ENCODE measurements at regions of chr21 and their contacts with region 1.

Region 1: DNA sequence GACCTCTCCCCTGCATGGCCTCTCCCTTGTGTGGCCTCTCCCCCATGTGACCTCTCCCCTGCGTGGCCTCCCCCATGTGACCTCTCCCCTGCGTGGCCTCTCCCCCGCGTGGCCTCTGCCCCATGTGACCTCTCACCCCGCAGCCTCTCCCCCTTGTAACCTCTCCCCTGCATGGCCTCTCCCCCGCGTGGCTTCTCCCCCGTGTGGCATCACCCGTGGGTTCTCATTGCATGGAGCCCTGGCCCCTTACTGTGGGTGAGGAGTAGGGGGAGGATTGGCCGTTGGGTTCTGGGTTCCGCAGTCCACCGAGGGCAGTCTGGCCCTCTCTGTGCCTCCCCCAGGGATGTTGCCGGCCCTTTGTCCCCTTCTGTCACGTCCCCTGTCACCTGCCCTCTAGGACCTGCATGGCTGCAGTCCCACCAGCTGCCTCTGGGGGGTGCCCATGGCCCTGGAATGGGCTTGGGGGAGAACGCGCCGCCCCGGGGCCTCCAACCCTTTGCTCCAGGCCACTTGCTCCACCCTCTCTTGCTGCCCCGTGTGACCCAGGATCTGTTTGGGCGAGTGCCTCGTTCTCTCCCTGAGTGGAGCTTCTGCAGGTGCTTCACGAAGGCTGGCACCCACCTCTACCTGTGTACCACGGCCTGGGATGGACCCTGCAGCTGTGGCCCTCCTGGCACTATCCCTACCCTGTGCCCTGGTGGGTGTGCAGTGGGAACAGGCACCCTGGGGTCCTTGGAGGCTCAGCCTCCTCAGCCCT is 21.3 kb downstream of the RRP1 start:
- DNase-seq: peak; percentile 36
- ATAC-seq: peak; percentile 85
- H3K4me3 ChIP-seq: no peak overlapping the region
- H3K27ac ChIP-seq: no peak overlapping the region
- H3K4me1 ChIP-seq: peaks cover 10 to 22% of the 10 kb centered on the region in 2 experiments
- H3K27me3 ChIP-seq: no peaks in the 10 kb centered on the region
- CTCF ChIP-seq: peak in 2 of 3 experiments; percentile 96 to 97; a peak in 4 of 6 replicates
- POLR2A ChIP-seq: no peak
- RAD21 ChIP-seq: no peak

Region 2: DNA sequence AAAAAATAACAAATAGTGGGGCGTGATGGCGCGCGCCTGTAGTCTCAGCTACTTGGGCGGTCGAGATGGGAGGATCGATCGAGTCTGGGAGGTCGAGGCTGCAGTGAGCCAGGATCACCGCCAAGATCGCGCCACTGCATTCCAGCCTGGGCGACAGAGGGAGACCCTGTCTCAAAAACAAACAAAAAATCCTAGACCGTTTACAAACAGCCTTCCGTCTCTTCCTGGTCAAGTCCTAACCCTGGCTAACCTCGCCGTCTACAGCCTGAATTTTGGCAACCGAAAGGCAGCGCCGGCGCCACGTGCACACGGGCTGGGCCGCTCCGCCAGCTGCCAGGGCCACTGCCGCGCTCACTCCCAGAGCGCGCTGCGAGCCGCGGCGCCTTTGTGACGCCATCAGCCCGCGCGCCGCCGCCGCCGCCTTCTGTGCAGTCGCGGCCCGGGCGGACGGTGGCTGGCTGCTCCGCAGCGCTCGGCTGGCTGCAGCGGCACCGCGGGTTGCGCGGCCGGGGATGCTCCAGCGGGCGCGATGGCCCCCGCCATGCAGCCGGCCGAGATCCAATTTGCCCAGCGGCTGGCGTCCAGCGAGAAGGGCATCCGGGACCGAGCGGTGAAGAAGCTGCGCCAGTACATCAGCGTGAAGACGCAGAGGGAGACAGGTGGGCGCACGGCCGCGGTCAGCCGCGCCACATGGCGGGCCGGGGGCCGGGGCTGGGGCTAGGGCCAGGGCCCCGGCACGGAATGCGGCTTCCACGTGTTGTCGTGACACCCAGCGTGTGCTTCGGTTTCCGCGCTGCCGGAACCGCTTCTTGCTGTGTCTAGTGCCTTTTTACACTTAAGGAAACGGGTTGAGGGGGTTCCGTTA is 151.3 kb before region 1 on chr21 and contains the starts of genes HSF2BP and RRP1B:
- CTCF ChIA-PET with region 1: no interaction called
- POLR2A ChIA-PET with region 1: no interaction called
- RAD21 ChIA-PET with region 1: no interaction called
- intact Hi-C with region 1: no loop called
- DNase-seq: peak; percentile 41
- ATAC-seq: peak; percentile 96
- H3K4me3 ChIP-seq: peak within 1 kb of the TSS; percentile 79 to 95
- H3K27ac ChIP-seq: peak within 1 kb of the TSS; percentile 83
- H3K4me1 ChIP-seq: peaks cover 10 to 25% of the 10 kb centered on the region in 2 experiments
- H3K27me3 ChIP-seq: no peaks in the 10 kb centered on the region
- CTCF ChIP-seq: no peak
- POLR2A ChIP-seq: peak; percentile 86
- RAD21 ChIP-seq: no peak
- total RNA-seq, gene HSF2BP: 0.59 TPM
- total RNA-seq, gene RRP1B: 55.9 TPM

Region 3: DNA sequence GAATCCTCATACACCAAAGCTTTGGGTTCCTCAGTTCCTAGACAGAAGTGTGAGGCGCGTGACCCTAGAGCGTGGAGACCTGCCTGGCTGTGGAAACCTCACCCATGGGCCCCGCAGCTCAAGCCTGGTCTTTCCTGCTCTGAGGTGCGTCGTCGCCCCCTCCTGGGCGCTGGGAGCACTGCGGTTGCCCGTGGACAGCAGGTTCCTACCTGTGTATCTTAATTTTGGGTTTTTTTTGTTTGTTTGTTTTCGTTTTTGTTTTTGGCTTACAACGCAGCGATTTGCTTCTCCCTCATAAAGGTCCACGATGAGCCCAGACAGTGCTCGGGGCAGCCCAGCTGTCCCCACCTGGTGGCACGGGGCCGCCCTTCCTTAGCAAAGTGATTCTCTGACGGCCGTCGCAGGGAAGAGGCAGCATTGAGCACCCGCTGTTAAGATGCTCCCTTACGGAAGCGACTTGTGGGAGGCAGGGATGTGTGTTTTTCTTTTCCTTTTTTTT is 164.9 kb after region 1 on chr21:
- CTCF ChIA-PET with region 1: interaction called, 7 read pairs
- POLR2A ChIA-PET with region 1: no interaction called
- RAD21 ChIA-PET with region 1: interaction called in 1 of 2 experiments, 3 read pairs
- intact Hi-C with region 1: loop called (anchors 1 kb)
- DNase-seq: peak; percentile 27
- ATAC-seq: peak; percentile 96
- H3K4me3 ChIP-seq: no peak overlapping the region
- H3K27ac ChIP-seq: no peak overlapping the region
- H3K4me1 ChIP-seq: no peaks in the 10 kb centered on the region; a peak in 1 of 4 replicates
- H3K27me3 ChIP-seq: no peaks in the 10 kb centered on the region
- CTCF ChIP-seq: peak; percentile 82 to 96 (median 95)
- POLR2A ChIP-seq: no peak
- RAD21 ChIP-seq: peak; percentile 86

Region 4: DNA sequence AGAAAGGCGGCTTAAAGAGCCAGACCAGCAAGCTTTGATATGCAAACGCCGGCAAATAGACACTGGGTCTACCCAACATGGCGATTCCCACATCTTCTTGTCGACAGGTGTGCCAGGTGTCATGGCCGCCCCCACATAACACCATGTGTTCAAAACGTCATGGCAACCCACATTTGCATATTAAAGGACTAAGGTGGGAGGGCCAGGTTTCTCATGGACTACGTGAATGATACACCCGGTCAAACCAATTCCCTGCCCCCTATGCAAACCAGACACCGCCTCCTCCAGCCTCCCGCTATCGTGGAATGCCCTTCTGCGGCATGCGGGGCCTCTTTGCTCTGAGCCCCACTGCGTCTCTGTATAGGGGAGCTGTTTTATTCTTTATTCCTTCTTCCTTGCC is 388.8 kb after region 1 on chr21:
- CTCF ChIA-PET with region 1: no interaction called
- POLR2A ChIA-PET with region 1: no interaction called
- RAD21 ChIA-PET with region 1: no interaction called
- intact Hi-C with region 1: no loop called
- DNase-seq: no peak
- ATAC-seq: no peak
- H3K4me3 ChIP-seq: no peak overlapping the region
- H3K27ac ChIP-seq: no peak overlapping the region
- H3K4me1 ChIP-seq: no peaks in the 10 kb centered on the region
- H3K27me3 ChIP-seq: no peaks in the 10 kb centered on the region
- CTCF ChIP-seq: no peak
- POLR2A ChIP-seq: no peak
- RAD21 ChIP-seq: no peak

Measured in HCT116 (cell line).